IMR-90 (cell line): ENCODE measurements at regions of chr17 and their contacts with region 1.

Region 1: DNA sequence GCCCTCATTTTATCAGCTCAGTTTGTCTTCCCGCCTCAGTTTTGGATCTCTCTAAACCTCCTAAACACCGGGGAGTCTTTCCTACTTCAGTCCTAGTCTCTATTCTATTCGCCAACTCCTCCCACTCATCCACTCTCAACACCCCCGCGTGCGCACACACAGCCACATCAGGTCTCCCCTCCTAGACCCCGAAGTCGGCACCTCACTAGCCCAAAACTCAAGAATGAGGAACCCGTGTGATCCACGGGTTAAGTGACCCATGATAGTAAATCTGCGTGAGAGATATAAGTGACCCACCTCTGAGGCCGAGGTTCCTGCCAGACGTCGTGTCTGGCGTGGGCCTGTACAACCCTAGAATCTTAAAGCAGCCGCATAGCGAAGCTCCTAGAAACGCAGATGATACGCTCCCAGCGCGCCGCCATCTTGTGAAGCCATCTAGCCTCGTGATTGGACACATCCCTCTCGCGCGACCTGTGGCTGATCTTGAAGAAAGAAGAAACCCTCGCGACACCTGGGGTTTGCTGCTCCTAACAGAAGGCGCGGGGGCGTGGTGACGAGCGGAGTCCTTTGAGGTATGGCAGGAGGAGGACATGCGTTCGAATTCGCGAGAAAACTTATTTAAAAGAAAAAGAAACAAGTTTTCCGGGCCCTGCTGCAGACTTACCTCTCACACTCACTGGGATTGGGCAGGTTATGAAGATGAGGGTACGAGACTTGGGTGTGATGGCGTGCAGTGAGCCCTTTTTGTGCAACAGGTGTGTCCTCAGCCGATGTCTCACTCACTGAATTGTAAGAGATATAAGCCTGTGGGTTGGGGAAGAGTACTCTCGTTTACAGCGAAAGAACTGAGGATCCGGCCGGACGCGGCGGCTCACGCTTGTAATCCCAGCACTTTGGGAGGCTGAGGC is at the start of gene METTL16:
- DNase-seq: peak; percentile 99
- ATAC-seq: peak; percentile 99
- H3K4me3 ChIP-seq: peak within 1 kb of the TSS; percentile 66
- H3K27ac ChIP-seq: peak within 1 kb of the TSS; percentile 83
- H3K4me1 ChIP-seq: no peaks in the 10 kb centered on the region; the same call in 1 of the 2 replicates
- H3K27me3 ChIP-seq: no peaks in the 10 kb centered on the region
- CTCF ChIP-seq: no peak
- POLR2A ChIP-seq: peak; percentile 93
- RAD21 ChIP-seq: no peak; the same call in 1 of the 2 replicates
- total RNA-seq, gene METTL16: 15.4 and 15.8 TPM in 2 replicates

Region 2: DNA sequence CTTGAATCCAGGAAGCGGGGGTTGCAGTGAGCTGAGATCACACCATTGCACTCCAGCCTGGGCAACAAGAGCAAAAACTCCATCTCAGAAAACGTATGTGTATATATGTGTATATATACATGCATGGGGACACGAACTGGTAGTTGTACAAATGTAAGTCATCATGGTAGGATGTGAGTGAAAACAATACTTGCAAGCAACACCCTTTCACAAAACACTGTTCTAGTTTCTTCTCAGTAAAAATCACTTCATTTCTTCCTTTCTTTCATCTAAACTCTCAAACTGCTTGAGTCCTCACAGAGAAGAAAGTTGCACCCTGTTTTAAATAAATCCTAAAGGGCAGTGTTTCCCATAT is 51.8 kb before region 1 on chr17:
- CTCF ChIA-PET with region 1: no interaction called
- POLR2A ChIA-PET with region 1: no interaction called
- dilution Hi-C with region 1: no loop called
- in situ Hi-C with region 1: no loop called
- intact Hi-C with region 1: loop called (anchors 2 kb)
- DNase-seq: no peak
- ATAC-seq: no peak
- H3K4me3 ChIP-seq: no peak overlapping the region
- H3K27ac ChIP-seq: peak overlapping the region; percentile 69; the same call in 1 of the 2 replicates
- H3K4me1 ChIP-seq: peaks cover 8% of the 10 kb centered on the region
- H3K27me3 ChIP-seq: no peaks in the 10 kb centered on the region
- CTCF ChIP-seq: no peak
- POLR2A ChIP-seq: no peak
- RAD21 ChIP-seq: no peak

Region 3: GRCh38 chr17:2672026-2672425 is 160.3 kb after region 1 on chr17:
- CTCF ChIA-PET with region 1: no interaction called
- POLR2A ChIA-PET with region 1: no interaction called
- dilution Hi-C with region 1: no loop called
- in situ Hi-C with region 1: no loop called
- intact Hi-C with region 1: loop called (anchors 2 kb)
- DNase-seq: no peak
- ATAC-seq: no peak
- H3K4me3 ChIP-seq: no peak overlapping the region
- H3K27ac ChIP-seq: no peak overlapping the region
- H3K4me1 ChIP-seq: no peaks in the 10 kb centered on the region
- H3K27me3 ChIP-seq: no peaks in the 10 kb centered on the region
- CTCF ChIP-seq: no peak
- POLR2A ChIP-seq: no peak
- RAD21 ChIP-seq: no peak